PC-3 (cell line): ENCODE measurements at regions of chr5 and their contacts with region 1.

Region 1: GRCh38 chr5:73519531-73520283 is 21.5 kb downstream of the BTF3 start:
- DNase-seq: peak; percentile 88
- ATAC-seq: peak; percentile 99
- H3K4me3 ChIP-seq: peak overlapping the region; percentile 17; the same call in 1 of the 2 replicates
- H3K27ac ChIP-seq: no peak overlapping the region
- H3K4me1 ChIP-seq: peaks cover 16% of the 10 kb centered on the region
- H3K27me3 ChIP-seq: no peaks in the 10 kb centered on the region
- CTCF ChIP-seq: peak; percentile 75

Region 2: GRCh38 chr5:73540192-73540591 is 20.5 kb after region 1 on chr5:
- CTCF ChIA-PET with region 1: interaction called, 5 read pairs
- POLR2A ChIA-PET with region 1: no interaction called
- intact Hi-C with region 1: loop called (anchors 1 kb)
- DNase-seq: peak; percentile 91
- ATAC-seq: peak; percentile 88
- H3K4me3 ChIP-seq: no peak overlapping the region
- H3K27ac ChIP-seq: peak overlapping the region; percentile 77
- H3K4me1 ChIP-seq: peaks cover 35% of the 10 kb centered on the region
- H3K27me3 ChIP-seq: no peaks in the 10 kb centered on the region
- CTCF ChIP-seq: no peak

Region 3: GRCh38 chr5:73565139-73565968 is 45.6 kb after region 1 on chr5 and contains the starts of genes ANKRA2 and UTP15:
- CTCF ChIA-PET with region 1: no interaction called
- POLR2A ChIA-PET with region 1: no interaction called
- intact Hi-C with region 1: loop called (anchors 2 kb)
- DNase-seq: peak; percentile 94
- ATAC-seq: peak; percentile 90
- H3K4me3 ChIP-seq: peak within 1 kb of the TSS; percentile 72
- H3K27ac ChIP-seq: peak within 1 kb of the TSS; percentile 8; the same call in 1 of the 2 replicates
- H3K4me1 ChIP-seq: peaks cover 8% of the 10 kb centered on the region; the same call in 1 of the 2 replicates
- H3K27me3 ChIP-seq: no peaks in the 10 kb centered on the region
- CTCF ChIP-seq: no peak
- total RNA-seq, gene ANKRA2: 3.2 and 4.4 TPM in 2 replicates
- total RNA-seq, gene UTP15: 20.9 and 27.6 TPM in 2 replicates

Region 4: GRCh38 chr5:73615085-73615484 is 95.4 kb after region 1 on chr5:
- CTCF ChIA-PET with region 1: no interaction called
- POLR2A ChIA-PET with region 1: no interaction called
- intact Hi-C with region 1: no loop called
- DNase-seq: peak; percentile 92
- ATAC-seq: peak; percentile 61
- H3K4me3 ChIP-seq: no peak overlapping the region
- H3K27ac ChIP-seq: peak overlapping the region; percentile 61
- H3K4me1 ChIP-seq: peaks cover 45% of the 10 kb centered on the region
- H3K27me3 ChIP-seq: no peaks in the 10 kb centered on the region
- CTCF ChIP-seq: no peak